ENCODE measurements at regions of chr4 and their contacts with region 1.

Region 1: GRCh38 chr4:126223784-126224407 is 909.1 kb downstream of the FAT4 start:
- DNase-seq: no peak
- ATAC-seq: no peak; the same call in 1 of the 2 replicates
- H3K4me3 Mint-ChIP-seq: no peak overlapping the region
- H3K27ac Mint-ChIP-seq: no peak overlapping the region
- H3K4me1 Mint-ChIP-seq: no peaks in the 10 kb centered on the region; the same call in 1 of the 2 replicates
- H3K27me3 Mint-ChIP-seq: no peaks in the 10 kb centered on the region
- CTCF ChIP-seq: peak; percentile 67

Region 2: GRCh38 chr4:126583509-126583908 is 359.6 kb after region 1 on chr4:
- CTCF ChIA-PET with region 1: interaction called, 18 read pairs
- POLR2A ChIA-PET with region 1: no interaction called
- DNase-seq: peak; percentile 45
- ATAC-seq: peak; percentile 98
- H3K4me3 Mint-ChIP-seq: no peak overlapping the region
- H3K27ac Mint-ChIP-seq: no peak overlapping the region
- H3K4me1 Mint-ChIP-seq: peaks cover 5% of the 10 kb centered on the region
- H3K27me3 Mint-ChIP-seq: no peaks in the 10 kb centered on the region
- CTCF ChIP-seq: no peak; the same call in 1 of the 2 replicates

Measured in WTC11 (cell line).